ENCODE measurements at regions of chr15 and their contacts with region 1.

Region 1: GRCh38 chr15:101221902-101222301 is 29.9 kb downstream of the CHSY1 start:
- DNase-seq: peak; percentile 72
- ATAC-seq: peak; percentile 85
- H3K4me3 ChIP-seq: no peak overlapping the region
- H3K27ac ChIP-seq: no peak overlapping the region
- H3K4me1 ChIP-seq: peaks cover 45% of the 10 kb centered on the region
- H3K27me3 ChIP-seq: no peaks in the 10 kb centered on the region
- CTCF ChIP-seq: no peak
- EP300 ChIP-seq: no peak
- POLR2A ChIP-seq: no peak
- RAD21 ChIP-seq: no peak

Region 2: GRCh38 chr15:101201406-101202174 is 20.3 kb before region 1 on chr15:
- CTCF ChIA-PET with region 1: no interaction called
- POLR2A ChIA-PET with region 1: no interaction called
- in situ Hi-C with region 1: no loop called
- intact Hi-C with region 1: no loop called
- DNase-seq: no peak
- ATAC-seq: no peak; the same call in 2 of the 3 replicates
- H3K4me3 ChIP-seq: no peak overlapping the region
- H3K27ac ChIP-seq: no peak overlapping the region
- H3K4me1 ChIP-seq: peaks cover 14% of the 10 kb centered on the region
- H3K27me3 ChIP-seq: no peaks in the 10 kb centered on the region
- CTCF ChIP-seq: no peak
- EP300 ChIP-seq: no peak
- POLR2A ChIP-seq: no peak
- RAD21 ChIP-seq: no peak

Region 3: DNA sequence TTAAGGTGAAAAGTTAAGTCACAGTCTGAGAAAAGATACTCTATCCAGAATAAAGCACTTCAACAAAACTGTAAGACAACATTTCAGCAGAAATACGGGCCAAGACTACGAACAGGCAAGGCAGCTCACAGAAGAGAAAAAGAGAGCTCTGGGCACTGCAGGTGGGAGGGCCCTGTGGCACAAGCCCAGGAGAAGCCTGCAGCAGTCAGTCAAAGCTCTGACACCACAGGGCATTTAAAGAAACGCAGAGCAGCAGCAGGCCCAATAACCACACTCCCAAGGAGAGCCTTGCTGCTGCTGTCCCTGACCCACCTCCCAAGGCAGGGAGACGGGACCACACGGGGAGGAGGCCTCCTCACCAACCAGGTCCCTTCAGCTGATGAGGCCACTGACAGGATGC is 10.8 kb after region 1 on chr15:
- CTCF ChIA-PET with region 1: no interaction called
- POLR2A ChIA-PET with region 1: no interaction called
- in situ Hi-C with region 1: no loop called
- intact Hi-C with region 1: loop called (anchors 1 kb)
- DNase-seq: no peak
- ATAC-seq: no peak
- H3K4me3 ChIP-seq: no peak overlapping the region
- H3K27ac ChIP-seq: no peak overlapping the region
- H3K4me1 ChIP-seq: no peaks in the 10 kb centered on the region
- H3K27me3 ChIP-seq: no peaks in the 10 kb centered on the region
- CTCF ChIP-seq: no peak
- EP300 ChIP-seq: no peak
- POLR2A ChIP-seq: no peak
- RAD21 ChIP-seq: no peak

Measured in HepG2 (cell line).